ENCODE measurements at regions of chr2 and their contacts with region 1.

Region 1: DNA sequence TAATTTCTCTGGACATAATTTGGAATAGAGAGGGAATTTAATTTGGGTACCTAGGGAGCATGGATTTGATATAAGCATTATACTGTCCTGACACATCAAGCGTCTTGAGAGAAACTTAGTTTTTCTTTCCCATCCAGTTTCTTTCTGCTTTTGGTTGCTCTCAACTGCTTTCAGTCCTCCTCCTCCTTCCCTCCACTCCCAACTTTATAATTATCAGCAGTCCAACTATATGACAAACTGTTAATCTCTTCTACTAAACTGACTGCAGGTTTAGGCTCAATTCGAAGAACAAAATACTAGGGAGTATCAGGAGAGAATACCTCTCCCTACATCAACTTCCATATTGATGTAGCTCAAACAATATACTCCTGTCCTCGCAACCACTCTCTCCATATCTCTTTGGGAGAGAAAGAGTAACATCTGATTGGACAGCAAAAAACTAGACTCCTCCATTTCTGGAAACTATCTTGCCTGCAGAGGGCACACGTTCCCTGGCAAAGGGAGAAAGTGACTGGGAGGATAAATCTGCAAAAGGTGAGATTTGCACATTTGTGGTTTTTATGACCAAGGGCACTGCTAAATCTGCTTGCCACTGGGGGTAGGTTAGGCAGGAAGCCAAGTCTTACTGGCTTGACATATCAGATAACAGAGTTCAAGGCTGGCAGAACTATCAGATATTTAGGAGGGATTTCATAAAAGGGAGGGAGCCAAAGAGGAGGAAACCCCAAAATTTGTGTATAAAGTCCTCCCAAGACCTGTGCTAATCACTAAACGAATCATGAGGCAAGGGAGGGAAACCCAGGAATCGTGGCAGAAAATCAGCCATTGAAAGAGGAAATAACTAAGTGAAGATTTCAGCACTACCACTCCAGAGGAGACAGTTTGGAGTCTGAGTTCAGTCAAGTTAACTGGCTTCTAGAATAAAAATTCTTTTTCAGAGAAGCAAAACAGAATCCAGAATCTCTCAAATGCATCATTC is 40.0 kb downstream of the ICA1L start:
- DNase-seq: peak; percentile 84
- H3K4me3 Mint-ChIP-seq: no peak overlapping the region
- H3K27ac Mint-ChIP-seq: no peak overlapping the region
- H3K4me1 Mint-ChIP-seq: peaks cover 8% of the 10 kb centered on the region
- H3K27me3 Mint-ChIP-seq: no peaks in the 10 kb centered on the region
- CTCF ChIP-seq: peak; percentile 46

Region 2: DNA sequence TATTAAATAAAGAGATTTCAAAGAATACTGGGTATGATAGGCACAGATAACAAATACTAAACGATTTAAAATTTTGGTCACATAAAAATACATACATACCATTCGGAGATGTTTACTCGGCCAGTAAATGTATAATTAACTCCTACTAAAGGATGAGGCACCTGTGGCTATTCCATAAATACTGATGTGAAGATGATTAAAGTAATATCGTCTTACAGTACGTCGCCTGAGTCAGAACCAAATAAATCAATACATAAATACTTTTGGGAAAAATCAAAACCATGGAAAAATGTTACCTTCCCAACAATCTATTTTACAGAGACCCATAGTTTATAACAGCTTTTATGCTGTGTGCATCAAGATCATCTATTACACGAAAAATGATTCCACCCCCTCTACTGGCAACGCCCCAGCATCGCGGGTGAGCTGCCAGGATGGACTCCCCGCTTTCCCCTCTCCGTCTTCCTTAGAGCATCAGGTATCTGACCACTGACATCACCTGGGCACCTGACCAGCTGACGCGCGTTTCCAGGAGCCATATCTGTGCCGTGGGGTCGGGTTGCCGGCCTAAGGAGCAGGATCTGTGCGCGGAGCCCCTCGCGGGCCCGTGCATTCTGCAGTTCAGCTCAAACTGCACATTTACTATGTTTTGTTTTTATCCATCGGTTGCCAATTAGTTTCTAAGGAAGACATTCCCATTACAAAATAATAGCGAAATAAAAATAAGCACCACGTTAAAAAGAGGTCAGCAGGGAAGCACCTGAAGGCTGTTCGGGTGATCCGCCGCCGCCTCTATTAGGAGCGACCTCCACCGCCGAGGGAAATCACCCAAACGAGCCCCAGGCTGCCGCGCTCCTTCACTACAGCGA is 39.1 kb after region 1 on chr2:
- CTCF ChIA-PET with region 1: interaction called, 3 read pairs
- POLR2A ChIA-PET with region 1: interaction called, 8 read pairs
- intact Hi-C with region 1: loop called (anchors 2 kb)
- DNase-seq: peak; percentile 86
- H3K4me3 Mint-ChIP-seq: peak overlapping the region; percentile 72
- H3K27ac Mint-ChIP-seq: peak overlapping the region; percentile 57
- H3K4me1 Mint-ChIP-seq: peaks cover 5% of the 10 kb centered on the region
- H3K27me3 Mint-ChIP-seq: no peaks in the 10 kb centered on the region
- CTCF ChIP-seq: peak; percentile 52

Region 3: GRCh38 chr2:203122301-203122986 is 290.9 kb after region 1 on chr2:
- CTCF ChIA-PET with region 1: no interaction called
- POLR2A ChIA-PET with region 1: no interaction called
- intact Hi-C with region 1: loop called (anchors 5 kb)
- DNase-seq: peak; percentile 14
- H3K4me3 Mint-ChIP-seq: no peak overlapping the region
- H3K27ac Mint-ChIP-seq: no peak overlapping the region
- H3K4me1 Mint-ChIP-seq: no peaks in the 10 kb centered on the region
- H3K27me3 Mint-ChIP-seq: no peaks in the 10 kb centered on the region
- CTCF ChIP-seq: peak; percentile 9

Region 4: DNA sequence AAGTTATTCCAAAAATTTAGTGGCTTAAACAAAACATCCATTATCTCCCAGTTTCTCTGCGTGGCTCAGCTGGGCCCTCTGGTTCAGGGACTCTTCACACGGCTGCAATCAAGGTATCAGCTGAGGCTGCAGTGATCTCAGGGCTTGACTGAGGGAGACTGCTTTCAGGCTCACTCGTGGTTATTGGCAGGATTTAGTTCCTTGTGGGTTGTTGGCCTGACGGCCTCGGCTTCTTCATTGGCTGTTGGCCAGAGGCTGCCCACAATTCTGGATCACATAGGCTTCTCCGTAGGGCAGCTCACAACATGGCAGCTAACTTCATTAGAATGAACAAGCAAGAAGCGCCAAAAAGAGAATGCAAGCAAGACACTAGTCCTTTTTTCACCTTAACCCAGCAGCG is 586.7 kb after region 1 on chr2:
- CTCF ChIA-PET with region 1: no interaction called
- POLR2A ChIA-PET with region 1: no interaction called
- intact Hi-C with region 1: no loop called
- DNase-seq: no peak
- H3K4me3 Mint-ChIP-seq: no peak overlapping the region
- H3K27ac Mint-ChIP-seq: no peak overlapping the region
- H3K4me1 Mint-ChIP-seq: no peaks in the 10 kb centered on the region
- H3K27me3 Mint-ChIP-seq: no peaks in the 10 kb centered on the region
- CTCF ChIP-seq: no peak